ENCODE measurements at regions of chr12 and their contacts with region 1.

Region 1: GRCh38 chr12:31325877-31326631 is at the start of gene SINHCAF:
- DNase-seq: peak; percentile 94 to 100 (median 95)
- ATAC-seq: peak; percentile 77
- H3K4me3 ChIP-seq: peak within 1 kb of the TSS; percentile 71
- H3K27ac ChIP-seq: peak within 1 kb of the TSS; percentile 88
- H3K4me1 ChIP-seq: peaks cover 19 to 20% of the 10 kb centered on the region in 2 experiments; a peak in 4 of 5 replicates
- H3K27me3 ChIP-seq: peaks cover 0 to 5% of the 10 kb centered on the region in 2 experiments; a peak in 2 of 5 replicates
- CTCF ChIP-seq: no peak
- EP300 ChIP-seq: peak; percentile 16
- POLR2A ChIP-seq: peak; percentile 98
- RAD21 ChIP-seq: no peak
- polyA plus RNA-seq, gene SINHCAF: 141 to 165 TPM

Region 2: GRCh38 chr12:31312431-31312830 is 13.6 kb before region 1 on chr12:
- CTCF ChIA-PET with region 1: no interaction called
- POLR2A ChIA-PET with region 1: interaction called, 13 read pairs
- in situ Hi-C with region 1: no loop called
- intact Hi-C with region 1: no loop called
- DNase-seq: no peak
- ATAC-seq: no peak
- H3K4me3 ChIP-seq: no peak overlapping the region
- H3K27ac ChIP-seq: no peak overlapping the region
- H3K4me1 ChIP-seq: peaks cover 4 to 6% of the 10 kb centered on the region in 2 experiments; a peak in 4 of 5 replicates
- H3K27me3 ChIP-seq: no peaks in the 10 kb centered on the region
- CTCF ChIP-seq: no peak
- EP300 ChIP-seq: no peak
- POLR2A ChIP-seq: no peak
- RAD21 ChIP-seq: no peak

Region 3: GRCh38 chr12:31492599-31493196 is 166.6 kb after region 1 on chr12:
- CTCF ChIA-PET with region 1: no interaction called
- POLR2A ChIA-PET with region 1: no interaction called
- in situ Hi-C with region 1: no loop called
- intact Hi-C with region 1: no loop called
- DNase-seq: no peak
- ATAC-seq: no peak
- H3K4me3 ChIP-seq: no peak overlapping the region
- H3K27ac ChIP-seq: no peak overlapping the region
- H3K4me1 ChIP-seq: no peaks in the 10 kb centered on the region
- H3K27me3 ChIP-seq: no peaks in the 10 kb centered on the region
- CTCF ChIP-seq: no peak
- EP300 ChIP-seq: no peak
- POLR2A ChIP-seq: no peak
- RAD21 ChIP-seq: no peak

Measured in K562 (cell line).